Right lobe of liver (tissue), 6 donors: ENCODE measurements at regions of chr11 and their contacts with region 1.

Region 1: DNA sequence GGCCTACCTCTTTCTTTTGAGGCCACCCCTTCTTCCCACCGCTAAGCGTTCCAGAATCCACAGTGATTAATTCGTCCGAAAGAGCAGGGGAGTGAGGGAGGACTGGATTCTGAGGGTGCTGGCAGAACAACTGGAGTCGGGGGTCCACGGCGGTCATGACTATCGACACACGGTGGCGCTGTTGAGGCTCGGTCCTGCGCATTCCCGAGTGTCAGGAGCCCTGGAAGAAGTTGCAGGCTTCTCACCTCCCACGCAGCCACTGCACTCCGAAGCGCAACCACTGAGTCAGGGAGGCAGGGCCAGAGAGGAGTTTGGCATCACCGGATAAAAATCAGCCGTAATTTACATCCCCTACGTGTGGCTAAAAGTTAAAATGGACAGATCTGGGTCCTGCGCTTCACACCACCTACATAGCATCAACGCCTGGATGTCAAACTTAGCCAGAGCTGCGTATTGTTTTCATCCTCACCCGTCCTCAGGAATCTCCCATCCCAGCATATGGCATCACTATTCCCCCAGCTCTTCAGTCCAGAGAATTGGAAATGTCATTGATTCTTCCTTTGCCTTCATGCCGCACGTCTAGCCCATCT is 10.7 kb upstream of the CTSF start:
- DNase-seq: peak; percentile 75 to 81 (median 79)
- ATAC-seq: peak; percentile 94 to 99 (median 98)
- H3K4me3 ChIP-seq: no peak overlapping the region
- H3K27ac ChIP-seq: no peak overlapping the region
- H3K4me1 ChIP-seq: peaks cover 0 to 7% (median 0%) of the 10 kb centered on the region in 4 donors
- H3K27me3 ChIP-seq: no peaks in the 10 kb centered on the region
- CTCF ChIP-seq: peak; percentile 82 to 88 (median 83)
- POLR2A ChIP-seq: no peak

Region 2: GRCh38 chr11:66282468-66283386 is 296.4 kb before region 1 on chr11:
- intact Hi-C with region 1: no loop called
- DNase-seq: peak; percentile 100
- ATAC-seq: peak; percentile 89 to 96 (median 90)
- H3K4me3 ChIP-seq: no peak overlapping the region
- H3K27ac ChIP-seq: no peak overlapping the region
- H3K4me1 ChIP-seq: peaks cover 0 to 5% (median 1%) of the 10 kb centered on the region in 4 donors
- H3K27me3 ChIP-seq: no peaks in the 10 kb centered on the region
- CTCF ChIP-seq: peak; percentile 98 to 99 (median 99)
- POLR2A ChIP-seq: no peak

Region 3: GRCh38 chr11:66677599-66678375 is 98.7 kb after region 1 on chr11 and contains the start of gene RBM4B:
- intact Hi-C with region 1: loop called (anchors 5 kb)
- DNase-seq: peak; percentile 97
- ATAC-seq: peak; percentile 96 to 98 (median 96)
- H3K4me3 ChIP-seq: peak within 1 kb of the TSS; percentile 64 to 72 (median 66)
- H3K27ac ChIP-seq: peak within 1 kb of the TSS; percentile 77 to 83 (median 79)
- H3K4me1 ChIP-seq: peaks cover 0 to 23% (median 3%) of the 10 kb centered on the region in 4 donors
- H3K27me3 ChIP-seq: no peaks in the 10 kb centered on the region
- CTCF ChIP-seq: no peak
- POLR2A ChIP-seq: peak; percentile 76
- total RNA-seq, gene RBM4B: 3.6 to 9.4 (median 6.9) TPM

Region 4: DNA sequence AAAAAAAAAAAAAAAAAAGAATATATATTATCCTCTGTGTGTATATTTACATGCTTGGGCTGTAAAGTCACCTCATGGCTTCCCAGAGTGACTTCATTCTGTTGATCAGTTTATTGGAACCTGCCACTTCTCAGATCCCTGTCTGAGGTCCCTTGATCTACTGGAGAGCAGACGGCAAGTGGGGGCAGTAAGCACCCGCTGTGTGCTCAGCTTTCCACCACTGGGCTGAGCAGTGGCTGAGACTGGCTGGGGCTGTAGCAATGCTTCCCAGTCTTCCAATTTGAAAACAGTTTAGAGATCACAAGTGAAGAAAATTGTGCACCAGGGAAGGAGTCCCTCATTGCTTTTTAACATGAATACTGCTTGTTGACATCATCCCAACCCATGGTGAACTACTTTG is 105.5 kb after region 1 on chr11:
- intact Hi-C with region 1: loop called (anchors 5 kb)
- DNase-seq: no peak
- ATAC-seq: no peak
- H3K4me3 ChIP-seq: no peak overlapping the region
- H3K27ac ChIP-seq: no peak overlapping the region
- H3K4me1 ChIP-seq: no peaks in the 10 kb centered on the region
- H3K27me3 ChIP-seq: no peaks in the 10 kb centered on the region
- CTCF ChIP-seq: no peak
- POLR2A ChIP-seq: no peak